Body of pancreas (tissue), 4 donors: ENCODE measurements at regions of chr6 and their contacts with region 1.

Region 1: GRCh38 chr6:41032830-41033229 is 6.2 kb downstream of the UNC5CL start:
- DNase-seq: no peak
- ATAC-seq: no peak
- H3K4me3 ChIP-seq: no peak overlapping the region
- H3K27ac ChIP-seq: no peak overlapping the region
- H3K4me1 ChIP-seq: peaks cover 43% of the 10 kb centered on the region
- H3K27me3 ChIP-seq: no peaks in the 10 kb centered on the region
- CTCF ChIP-seq: no peak
- POLR2A ChIP-seq: no peak

Region 2: DNA sequence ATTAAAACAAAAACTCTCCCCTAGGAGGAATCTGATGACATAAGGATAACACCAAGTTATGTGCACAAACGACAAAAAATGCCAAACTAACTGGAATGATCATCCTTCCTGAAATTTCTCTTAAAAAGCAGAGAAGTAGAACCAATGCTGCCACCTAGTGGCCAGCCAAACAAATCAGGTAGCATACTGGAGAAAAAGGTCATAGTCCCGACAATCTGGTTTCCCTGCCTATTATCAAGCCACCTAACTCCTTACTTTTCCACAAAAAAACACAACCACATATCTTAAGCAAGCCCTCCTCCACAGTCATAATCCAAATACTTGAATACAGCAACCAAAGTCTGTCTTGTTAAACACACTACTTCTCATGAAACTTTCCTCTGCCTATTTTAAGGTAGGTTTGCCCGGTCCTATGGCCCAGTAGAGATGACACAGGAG is 34.1 kb after region 1 on chr6:
- intact Hi-C with region 1: loop called (anchors 5 kb)
- DNase-seq: peak; percentile 86 to 91 (median 88)
- ATAC-seq: peak; percentile 30
- H3K4me3 ChIP-seq: no peak overlapping the region
- H3K27ac ChIP-seq: peak overlapping the region in 3 of 4 donors; percentile 72 to 85 (median 82)
- H3K4me1 ChIP-seq: peaks cover 63% of the 10 kb centered on the region
- H3K27me3 ChIP-seq: no peaks in the 10 kb centered on the region
- CTCF ChIP-seq: peak; percentile 45 to 94 (median 88)
- POLR2A ChIP-seq: no peak

Region 3: GRCh38 chr6:41256383-41256782 is 223.6 kb after region 1 on chr6:
- intact Hi-C with region 1: no loop called
- DNase-seq: no peak
- ATAC-seq: no peak
- H3K4me3 ChIP-seq: no peak overlapping the region
- H3K27ac ChIP-seq: no peak overlapping the region
- H3K4me1 ChIP-seq: peaks cover 19% of the 10 kb centered on the region
- H3K27me3 ChIP-seq: no peaks in the 10 kb centered on the region
- CTCF ChIP-seq: no peak
- POLR2A ChIP-seq: no peak